Common myeloid progenitor, CD34-positive (primary cell): ENCODE measurements at regions of chr18 and their contacts with region 1.

Region 1: DNA sequence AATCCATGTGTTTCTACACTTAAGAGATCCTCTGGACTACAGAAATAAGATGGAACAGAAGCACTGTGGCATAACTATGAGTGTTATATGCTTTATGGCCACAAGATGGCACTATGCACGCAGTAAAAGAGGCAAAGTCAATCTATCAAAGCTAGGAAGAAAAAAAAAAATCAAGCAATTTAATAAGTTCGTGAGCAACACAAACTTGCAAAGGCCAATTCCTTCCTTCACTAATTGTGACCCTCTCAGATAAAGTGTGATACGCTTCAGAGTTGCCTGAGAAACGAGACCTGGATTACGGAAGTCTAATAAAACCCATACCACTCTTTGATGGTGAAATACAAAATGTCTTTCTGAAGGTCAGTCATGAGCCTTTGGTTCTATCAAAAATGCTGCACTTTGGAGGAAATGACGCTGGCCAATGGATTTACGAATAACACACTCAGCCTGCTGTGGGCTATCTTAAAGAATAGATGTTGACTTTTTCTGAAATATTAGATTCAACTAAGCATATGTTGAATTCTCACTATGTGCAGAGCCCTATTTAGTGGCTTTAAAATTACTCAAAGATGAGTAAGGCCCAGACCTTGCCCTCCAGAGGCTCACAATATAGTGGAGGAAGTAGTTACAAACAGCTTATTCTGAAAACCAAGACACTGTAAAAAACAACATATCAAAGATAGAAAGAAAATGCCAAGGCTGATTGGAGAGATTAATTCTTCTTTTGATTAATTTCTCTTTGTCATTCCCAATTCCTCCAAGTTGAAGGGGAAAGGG is 35.5 kb upstream of the TTR start:
- DNase-seq: peak; percentile 79 to 88 (median 84)
- H3K4me3 ChIP-seq: peak overlapping the region in 1 of 7 experiments; percentile 42
- H3K27ac ChIP-seq: no peak overlapping the region
- H3K4me1 ChIP-seq: peaks cover 0 to 5% (median 3%) of the 10 kb centered on the region in 4 experiments
- H3K27me3 ChIP-seq: no peaks in the 10 kb centered on the region

Region 2: GRCh38 chr18:31410716-31411483 is 145.3 kb before region 1 on chr18:
- CTCF ChIA-PET with region 1: no interaction called
- POLR2A ChIA-PET with region 1: no interaction called
- DNase-seq: no peak
- H3K4me3 ChIP-seq: no peak overlapping the region
- H3K27ac ChIP-seq: no peak overlapping the region
- H3K4me1 ChIP-seq: no peaks in the 10 kb centered on the region
- H3K27me3 ChIP-seq: peaks cover 0 to 5% (median 0%) of the 10 kb centered on the region in 5 experiments

Region 3: GRCh38 chr18:31648966-31649429 is 92.8 kb after region 1 on chr18:
- CTCF ChIA-PET with region 1: no interaction called
- POLR2A ChIA-PET with region 1: no interaction called
- DNase-seq: peak in 2 of 3 donors; percentile 63 to 72
- H3K4me3 ChIP-seq: no peak overlapping the region
- H3K27ac ChIP-seq: no peak overlapping the region
- H3K4me1 ChIP-seq: peaks cover 9 to 76% (median 54%) of the 10 kb centered on the region in 4 experiments
- H3K27me3 ChIP-seq: no peaks in the 10 kb centered on the region

Region 4: GRCh38 chr18:31819106-31819924 is 263.2 kb after region 1 on chr18:
- CTCF ChIA-PET with region 1: interaction called, 34 read pairs
- POLR2A ChIA-PET with region 1: no interaction called
- DNase-seq: peak; percentile 60 to 76 (median 69)
- H3K4me3 ChIP-seq: no peak overlapping the region
- H3K27ac ChIP-seq: no peak overlapping the region
- H3K4me1 ChIP-seq: peaks cover 0 to 9% (median 4%) of the 10 kb centered on the region in 4 experiments
- H3K27me3 ChIP-seq: no peaks in the 10 kb centered on the region